Esophagus muscularis mucosa (tissue), 4 donors: ENCODE measurements at regions of chr1 and their contacts with region 1.

Region 1: GRCh38 chr1:179954493-179955297 is at the start of gene CEP350:
- DNase-seq: peak; percentile 99
- H3K4me3 ChIP-seq: peak within 1 kb of the TSS; percentile 88 to 99 (median 94)
- H3K27ac ChIP-seq: peak within 1 kb of the TSS; percentile 95 to 98 (median 96)
- H3K4me1 ChIP-seq: peaks cover 29 to 41% (median 34%) of the 10 kb centered on the region in 4 donors
- H3K27me3 ChIP-seq: no peaks in the 10 kb centered on the region
- CTCF ChIP-seq: no peak
- EP300 ChIP-seq: no peak
- POLR2A ChIP-seq: no peak
- total RNA-seq, gene CEP350: 61.0 to 80.6 (median 65.1) TPM

Region 2: GRCh38 chr1:179856296-179856695 is 98.4 kb before region 1 on chr1:
- intact Hi-C with region 1: no loop called
- DNase-seq: no peak
- H3K4me3 ChIP-seq: no peak overlapping the region
- H3K27ac ChIP-seq: no peak overlapping the region
- H3K4me1 ChIP-seq: no peaks in the 10 kb centered on the region
- H3K27me3 ChIP-seq: no peaks in the 10 kb centered on the region
- CTCF ChIP-seq: no peak
- EP300 ChIP-seq: no peak
- POLR2A ChIP-seq: no peak

Region 3: GRCh38 chr1:179882243-179883039 is 72.3 kb before region 1 on chr1 and contains the start of gene TOR1AIP1:
- intact Hi-C with region 1: loop called (anchors 5 kb)
- DNase-seq: peak; percentile 98
- H3K4me3 ChIP-seq: peak within 1 kb of the TSS; percentile 81 to 92 (median 83)
- H3K27ac ChIP-seq: peak within 1 kb of the TSS; percentile 95 to 98 (median 98)
- H3K4me1 ChIP-seq: peaks cover 41 to 58% (median 58%) of the 10 kb centered on the region in 4 donors
- H3K27me3 ChIP-seq: no peaks in the 10 kb centered on the region
- CTCF ChIP-seq: peak; percentile 8 to 61 (median 36)
- EP300 ChIP-seq: no peak
- POLR2A ChIP-seq: peak; percentile 60
- total RNA-seq, gene TOR1AIP1: 114 to 145 (median 126) TPM

Region 4: GRCh38 chr1:180027949-180028445 is 73.3 kb after region 1 on chr1:
- intact Hi-C with region 1: loop called (anchors 5 kb)
- DNase-seq: no peak
- H3K4me3 ChIP-seq: no peak overlapping the region
- H3K27ac ChIP-seq: peak overlapping the region; percentile 62 to 79 (median 71)
- H3K4me1 ChIP-seq: peaks cover 0 to 43% (median 33%) of the 10 kb centered on the region in 4 donors
- H3K27me3 ChIP-seq: no peaks in the 10 kb centered on the region
- CTCF ChIP-seq: no peak
- EP300 ChIP-seq: no peak
- POLR2A ChIP-seq: no peak

Region 5: GRCh38 chr1:180178511-180179161 is 223.9 kb after region 1 on chr1:
- intact Hi-C with region 1: loop called (anchors 10 kb)
- DNase-seq: no peak
- H3K4me3 ChIP-seq: no peak overlapping the region
- H3K27ac ChIP-seq: no peak overlapping the region
- H3K4me1 ChIP-seq: peaks cover 11 to 18% (median 11%) of the 10 kb centered on the region in 4 donors
- H3K27me3 ChIP-seq: no peaks in the 10 kb centered on the region
- CTCF ChIP-seq: peak; percentile 90 to 99 (median 96)
- EP300 ChIP-seq: no peak
- POLR2A ChIP-seq: no peak